Adrenal gland (tissue), 19 donors: ENCODE measurements at regions of chr12 and their contacts with region 1.

Region 1: GRCh38 chr12:117836999-117837736 is 131.6 kb downstream of the KSR2 start:
- DNase-seq: peak; percentile 57 to 91 (median 78)
- H3K4me3 ChIP-seq: no peak overlapping the region
- H3K27ac ChIP-seq: no peak overlapping the region
- H3K4me1 ChIP-seq: no peaks in the 10 kb centered on the region
- H3K27me3 ChIP-seq: peaks cover 4% of the 10 kb centered on the region
- CTCF ChIP-seq: peak; percentile 83 to 92 (median 89)
- POLR2A ChIP-seq: no peak

Region 2: GRCh38 chr12:117212563-117213190 is 624.5 kb before region 1 on chr12:
- intact Hi-C with region 1: loop called (anchors 5 kb)
- DNase-seq: peak; percentile 75 to 94 (median 80)
- H3K4me3 ChIP-seq: no peak overlapping the region
- H3K27ac ChIP-seq: no peak overlapping the region
- H3K4me1 ChIP-seq: no peaks in the 10 kb centered on the region
- H3K27me3 ChIP-seq: peaks cover 4% of the 10 kb centered on the region
- CTCF ChIP-seq: peak; percentile 84 to 93 (median 88)
- POLR2A ChIP-seq: no peak

Region 3: GRCh38 chr12:117236456-117237001 is 600.6 kb before region 1 on chr12:
- intact Hi-C with region 1: loop called in 1 of 2 experiments (anchors 5 kb)
- DNase-seq: peak; percentile 68 to 90 (median 87)
- H3K4me3 ChIP-seq: no peak overlapping the region
- H3K27ac ChIP-seq: no peak overlapping the region
- H3K4me1 ChIP-seq: no peaks in the 10 kb centered on the region
- H3K27me3 ChIP-seq: peaks cover 9% of the 10 kb centered on the region
- CTCF ChIP-seq: peak; percentile 43 to 81 (median 61)
- POLR2A ChIP-seq: no peak

Region 4: DNA sequence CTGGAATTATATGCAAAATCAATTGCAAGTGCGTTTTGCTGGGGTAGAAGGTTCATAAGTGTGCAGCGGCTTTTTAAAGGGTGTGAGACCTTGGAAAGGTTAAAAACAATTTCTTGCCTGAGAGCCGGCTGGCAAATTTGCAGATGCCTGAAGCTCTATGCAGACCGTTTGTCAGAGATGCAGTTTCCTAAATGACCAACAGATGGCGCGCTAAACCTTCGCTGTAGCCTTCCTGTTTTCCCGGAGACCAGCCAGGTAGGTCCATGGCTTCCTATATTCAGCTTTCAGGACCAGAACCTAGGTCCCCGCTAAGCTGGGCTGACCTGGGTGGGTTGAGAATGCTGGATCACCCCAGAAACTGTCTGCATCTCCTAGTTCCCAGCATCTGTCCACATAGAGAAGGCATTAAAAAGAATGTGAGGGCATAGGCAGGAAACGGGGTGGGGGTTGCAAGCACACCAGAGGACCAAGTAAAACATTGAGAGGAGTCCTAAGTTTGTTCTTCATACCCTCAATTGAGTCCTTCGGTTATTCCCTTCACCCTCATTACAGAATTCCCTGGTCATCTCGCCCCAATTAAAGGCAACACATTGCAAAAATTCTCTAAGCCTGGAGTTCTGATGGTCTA is 470.0 kb before region 1 on chr12:
- intact Hi-C with region 1: loop called (anchors 5 to 10 kb)
- DNase-seq: peak; percentile 57 to 92 (median 83)
- H3K4me3 ChIP-seq: no peak overlapping the region
- H3K27ac ChIP-seq: no peak overlapping the region
- H3K4me1 ChIP-seq: no peaks in the 10 kb centered on the region
- H3K27me3 ChIP-seq: peaks cover 16% of the 10 kb centered on the region
- CTCF ChIP-seq: peak; percentile 80 to 89 (median 88)
- POLR2A ChIP-seq: no peak

Region 5: GRCh38 chr12:117919479-117919878 is 82.3 kb after region 1 on chr12:
- intact Hi-C with region 1: no loop called
- DNase-seq: no peak
- H3K4me3 ChIP-seq: no peak overlapping the region
- H3K27ac ChIP-seq: no peak overlapping the region
- H3K4me1 ChIP-seq: no peaks in the 10 kb centered on the region
- H3K27me3 ChIP-seq: no peaks in the 10 kb centered on the region
- CTCF ChIP-seq: no peak
- POLR2A ChIP-seq: no peak

Region 6: GRCh38 chr12:118135788-118136558 is 298.8 kb after region 1 on chr12 and contains the start of gene PEBP1:
- intact Hi-C with region 1: no loop called
- DNase-seq: peak; percentile 96 to 98 (median 97)
- H3K4me3 ChIP-seq: peak within 1 kb of the TSS; percentile 70 to 99 (median 97)
- H3K27ac ChIP-seq: peak within 1 kb of the TSS; percentile 82 to 99 (median 88)
- H3K4me1 ChIP-seq: peaks cover 33 to 49% of the 10 kb centered on the region in 2 donors
- H3K27me3 ChIP-seq: no peaks in the 10 kb centered on the region
- CTCF ChIP-seq: no peak
- POLR2A ChIP-seq: peak; percentile 96 to 99
- total RNA-seq, gene PEBP1: 1,179 to 3,690 (median 2,563) TPM